Activated CD4-positive, alpha-beta T cell treated with anti-CD3 and anti-CD28 coated beads, Interleukin-2, amount 10 ng/mL, durations not matched to agents 24 days and 14 days (primary cell): ENCODE measurements at regions of chr14 and their contacts with region 1.

Region 1: GRCh38 chr14:53601409-53601808 is 355.2 kb downstream of the BMP4 start:
- DNase-seq: no peak
- H3K4me3 Mint-ChIP-seq: no peak overlapping the region
- H3K27ac Mint-ChIP-seq: no peak overlapping the region
- H3K4me1 Mint-ChIP-seq: no peaks in the 10 kb centered on the region
- H3K27me3 Mint-ChIP-seq: no peaks in the 10 kb centered on the region

Region 2: GRCh38 chr14:53672526-53672925 is 71.1 kb after region 1 on chr14:
- intact Hi-C with region 1: loop called (anchors 2 kb)
- DNase-seq: no peak
- H3K4me3 Mint-ChIP-seq: no peak overlapping the region
- H3K27ac Mint-ChIP-seq: no peak overlapping the region
- H3K4me1 Mint-ChIP-seq: no peaks in the 10 kb centered on the region
- H3K27me3 Mint-ChIP-seq: no peaks in the 10 kb centered on the region